Activated CD8-positive, alpha-beta T cell treated with anti-CD3 and anti-CD28 coated beads for 36 hours (primary cell): ENCODE measurements at regions of chr7 and their contacts with region 1.

Region 1: DNA sequence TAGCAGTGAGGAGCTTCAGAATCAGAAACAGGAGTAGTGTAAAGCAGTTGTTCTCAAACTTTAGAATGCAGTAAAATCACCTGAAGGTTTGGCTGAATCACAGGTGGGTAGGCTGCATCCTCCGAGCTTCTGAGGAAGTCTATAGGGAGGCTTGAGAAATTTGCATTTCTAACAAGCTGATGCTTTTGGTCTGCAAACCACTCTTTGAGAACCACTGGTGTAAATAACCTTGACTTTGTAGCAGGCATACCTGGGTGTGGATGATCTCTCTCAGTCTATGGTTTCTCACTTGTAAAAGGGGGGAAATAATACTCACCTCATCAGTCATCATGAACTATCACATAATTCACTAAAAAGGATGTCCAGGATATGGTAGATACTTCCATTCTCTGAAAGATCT is 118.1 kb downstream of the SRI start:
- DNase-seq: no peak
- ATAC-seq: peak; percentile 69
- H3K4me3 Mint-ChIP-seq: no peak overlapping the region
- H3K27ac Mint-ChIP-seq: no peak overlapping the region
- H3K4me1 Mint-ChIP-seq: peaks cover 11% of the 10 kb centered on the region
- H3K27me3 Mint-ChIP-seq: no peaks in the 10 kb centered on the region
- CTCF ChIP-seq: no peak

Region 2: DNA sequence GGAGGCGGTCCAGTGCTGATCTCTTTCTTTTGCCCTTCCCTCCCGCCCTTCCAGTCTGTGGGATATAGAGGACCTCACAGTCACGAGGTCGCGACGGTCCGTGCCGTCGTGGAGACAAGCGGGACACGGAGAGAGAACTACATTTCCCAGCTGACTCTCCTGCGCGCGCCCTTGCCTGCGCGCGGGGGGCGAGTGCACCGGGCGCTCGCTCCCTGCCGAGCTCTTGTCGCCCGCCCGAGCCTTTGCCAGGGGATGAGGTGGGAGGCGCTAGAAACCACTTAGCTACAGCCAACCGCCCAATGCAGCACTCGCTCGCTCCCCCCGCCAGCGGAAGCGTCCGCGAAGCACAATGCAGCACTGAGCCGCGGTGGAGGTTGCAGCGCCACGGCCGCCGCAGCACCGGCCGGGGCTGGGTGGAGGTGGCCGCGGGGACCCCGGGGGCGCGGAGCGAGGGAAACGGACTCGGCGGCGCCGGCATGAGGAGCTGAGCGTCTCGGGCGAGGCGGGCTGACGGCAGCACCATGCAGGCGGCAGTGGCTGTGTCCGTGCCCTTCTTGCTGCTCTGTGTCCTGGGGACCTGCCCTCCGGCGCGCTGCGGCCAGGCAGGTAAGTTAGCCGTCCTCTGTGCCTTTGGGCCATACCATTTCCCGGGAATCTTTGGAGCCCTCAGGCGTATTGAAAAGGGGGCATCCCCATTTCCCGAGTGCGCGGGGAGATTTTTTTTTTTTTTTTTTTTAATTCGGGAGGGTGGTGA is 167.6 kb before region 1 on chr7 and contains the start of gene ADAM22:
- CTCF ChIA-PET with region 1: no interaction called
- POLR2A ChIA-PET with region 1: no interaction called
- intact Hi-C with region 1: loop called (anchors 10 kb)
- DNase-seq: peak; percentile 94
- ATAC-seq: peak; percentile 99
- H3K4me3 Mint-ChIP-seq: peak within 1 kb of the TSS; percentile 76
- H3K27ac Mint-ChIP-seq: peak within 1 kb of the TSS; percentile 79
- H3K4me1 Mint-ChIP-seq: peaks cover 9% of the 10 kb centered on the region
- H3K27me3 Mint-ChIP-seq: peaks cover 4% of the 10 kb centered on the region
- CTCF ChIP-seq: no peak
- total RNA-seq, gene ADAM22: 2.3 to 3.0 TPM

Region 3: DNA sequence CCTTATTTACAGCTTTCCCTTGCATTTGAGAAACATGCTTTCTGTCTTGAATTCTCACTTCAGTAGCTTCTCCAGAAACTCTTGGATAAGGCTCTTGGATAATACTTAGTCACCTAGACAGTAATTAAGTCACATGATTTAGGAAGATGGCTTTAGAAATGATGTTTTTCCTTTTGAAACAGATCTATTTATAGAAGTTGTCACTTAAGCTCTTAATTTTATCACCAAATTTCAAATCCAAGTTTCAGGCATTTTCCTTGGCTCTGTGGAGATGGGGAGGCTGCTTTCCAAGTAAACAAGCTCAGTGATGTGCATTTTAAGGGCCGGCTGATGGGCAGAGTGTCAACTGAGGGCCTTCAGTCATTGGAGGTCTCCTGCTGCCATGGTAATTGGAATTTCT is 12.2 kb before region 1 on chr7:
- CTCF ChIA-PET with region 1: no interaction called
- POLR2A ChIA-PET with region 1: no interaction called
- intact Hi-C with region 1: no loop called
- DNase-seq: no peak
- ATAC-seq: no peak
- H3K4me3 Mint-ChIP-seq: no peak overlapping the region
- H3K27ac Mint-ChIP-seq: no peak overlapping the region
- H3K4me1 Mint-ChIP-seq: peaks cover 13% of the 10 kb centered on the region
- H3K27me3 Mint-ChIP-seq: no peaks in the 10 kb centered on the region
- CTCF ChIP-seq: no peak